Caco-2 (cell line): ENCODE measurements at regions of chr3 and their contacts with region 1.

Region 1: GRCh38 chr3:44206862-44207652 is 34.6 kb upstream of the TOPAZ1 start:
- DNase-seq: no peak
- H3K4me3 ChIP-seq: no peak overlapping the region
- H3K4me3 Mint-ChIP-seq: no peak overlapping the region
- H3K27ac Mint-ChIP-seq: peak overlapping the region; percentile 85
- H3K4me1 ChIP-seq: peaks cover 27% of the 10 kb centered on the region
- H3K4me1 Mint-ChIP-seq: peaks cover 12% of the 10 kb centered on the region
- H3K27me3 ChIP-seq: no peaks in the 10 kb centered on the region
- H3K27me3 Mint-ChIP-seq: no peaks in the 10 kb centered on the region
- CTCF ChIP-seq: no peak

Region 2: DNA sequence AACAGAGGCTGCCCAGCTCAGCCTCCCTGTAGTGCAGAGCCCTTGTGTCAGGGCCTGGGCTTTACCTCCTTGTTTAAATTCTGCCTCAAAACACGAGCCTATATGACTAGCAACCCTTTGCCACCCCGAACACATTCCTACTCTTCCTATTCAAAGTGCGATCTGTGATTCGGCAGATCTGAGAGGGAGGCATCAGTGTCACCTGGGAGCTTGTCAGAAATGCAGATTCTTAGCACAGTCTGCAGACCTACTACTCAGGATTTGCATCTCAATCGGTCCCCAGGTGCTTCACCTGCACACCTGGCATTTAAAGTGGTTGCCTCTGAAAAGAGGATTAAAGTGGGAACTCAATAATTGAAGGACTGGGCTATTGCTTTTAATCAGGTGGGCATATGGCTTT is 238.6 kb before region 1 on chr3:
- CTCF ChIA-PET with region 1: no interaction called
- POLR2A ChIA-PET with region 1: no interaction called
- intact Hi-C with region 1: no loop called
- DNase-seq: no peak
- H3K4me3 ChIP-seq: no peak overlapping the region
- H3K4me3 Mint-ChIP-seq: no peak overlapping the region
- H3K27ac Mint-ChIP-seq: no peak overlapping the region
- H3K4me1 ChIP-seq: no peaks in the 10 kb centered on the region
- H3K4me1 Mint-ChIP-seq: no peaks in the 10 kb centered on the region
- H3K27me3 ChIP-seq: no peaks in the 10 kb centered on the region; the same call in 1 of the 2 replicates
- H3K27me3 Mint-ChIP-seq: peaks cover 19% of the 10 kb centered on the region
- CTCF ChIP-seq: no peak

Region 3: DNA sequence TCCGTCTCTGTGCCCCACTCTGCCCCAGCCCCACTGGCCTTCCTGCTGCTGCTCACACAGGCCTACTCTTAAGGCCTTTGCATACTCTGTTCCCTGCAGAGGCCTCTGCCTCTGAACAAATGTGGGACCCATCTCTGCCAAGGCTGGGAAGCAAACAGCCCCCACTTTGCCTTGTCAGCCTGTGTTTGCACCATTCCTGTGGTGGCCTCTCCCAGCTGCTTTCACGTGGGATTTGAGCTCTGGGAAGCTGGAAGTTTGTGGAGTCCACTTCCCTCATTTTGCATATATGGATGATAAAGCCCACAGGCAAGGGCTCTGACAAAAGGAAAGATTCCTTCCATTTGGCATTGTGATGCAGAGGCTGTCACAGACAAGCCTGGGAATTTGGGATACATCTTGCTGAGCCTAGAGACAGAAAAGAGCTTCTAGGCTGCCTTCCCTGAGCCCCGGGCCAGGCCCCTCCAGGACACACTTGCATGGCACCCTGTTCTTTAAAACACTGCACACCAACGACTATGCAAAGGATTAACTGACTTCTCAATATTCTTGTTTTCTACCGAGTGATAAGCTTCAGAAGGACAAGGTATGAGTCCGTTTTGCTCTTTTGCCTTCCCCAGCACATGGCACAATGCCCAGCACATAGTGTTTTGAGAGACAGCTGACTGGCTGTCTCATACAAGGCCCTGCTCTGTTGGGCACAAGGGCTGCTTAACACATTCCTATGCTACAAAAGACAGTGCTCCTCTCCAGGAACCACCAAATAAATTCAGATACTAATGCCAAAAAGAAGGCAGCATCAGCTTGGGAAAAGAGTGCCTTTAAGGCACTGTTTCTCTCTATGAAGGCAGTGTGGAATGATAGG is 86.1 kb before region 1 on chr3:
- CTCF ChIA-PET with region 1: no interaction called
- POLR2A ChIA-PET with region 1: no interaction called
- intact Hi-C with region 1: no loop called
- DNase-seq: no peak
- H3K4me3 ChIP-seq: no peak overlapping the region
- H3K4me3 Mint-ChIP-seq: no peak overlapping the region
- H3K27ac Mint-ChIP-seq: no peak overlapping the region
- H3K4me1 ChIP-seq: peaks cover 23% of the 10 kb centered on the region
- H3K4me1 Mint-ChIP-seq: peaks cover 11% of the 10 kb centered on the region
- H3K27me3 ChIP-seq: no peaks in the 10 kb centered on the region
- H3K27me3 Mint-ChIP-seq: no peaks in the 10 kb centered on the region
- CTCF ChIP-seq: no peak

Region 4: GRCh38 chr3:44160818-44161217 is 46.2 kb before region 1 on chr3:
- CTCF ChIA-PET with region 1: no interaction called
- POLR2A ChIA-PET with region 1: no interaction called
- intact Hi-C with region 1: no loop called
- DNase-seq: no peak
- H3K4me3 ChIP-seq: no peak overlapping the region
- H3K4me3 Mint-ChIP-seq: no peak overlapping the region
- H3K27ac Mint-ChIP-seq: no peak overlapping the region
- H3K4me1 ChIP-seq: no peaks in the 10 kb centered on the region
- H3K4me1 Mint-ChIP-seq: no peaks in the 10 kb centered on the region
- H3K27me3 ChIP-seq: no peaks in the 10 kb centered on the region; the same call in 1 of the 2 replicates
- H3K27me3 Mint-ChIP-seq: peaks cover 20% of the 10 kb centered on the region
- CTCF ChIP-seq: no peak

Region 5: GRCh38 chr3:44179246-44179645 is 27.8 kb before region 1 on chr3:
- CTCF ChIA-PET with region 1: no interaction called
- POLR2A ChIA-PET with region 1: no interaction called
- intact Hi-C with region 1: loop called (anchors 1 kb)
- DNase-seq: no peak
- H3K4me3 ChIP-seq: no peak overlapping the region
- H3K4me3 Mint-ChIP-seq: no peak overlapping the region
- H3K27ac Mint-ChIP-seq: no peak overlapping the region
- H3K4me1 ChIP-seq: no peaks in the 10 kb centered on the region
- H3K4me1 Mint-ChIP-seq: peaks cover 15% of the 10 kb centered on the region
- H3K27me3 ChIP-seq: no peaks in the 10 kb centered on the region
- H3K27me3 Mint-ChIP-seq: peaks cover 4% of the 10 kb centered on the region
- CTCF ChIP-seq: no peak

Region 6: GRCh38 chr3:44235604-44236484 is 28.8 kb after region 1 on chr3:
- CTCF ChIA-PET with region 1: interaction called, 3 read pairs
- POLR2A ChIA-PET with region 1: no interaction called
- intact Hi-C with region 1: loop called (anchors 2 kb)
- DNase-seq: peak; percentile 66 to 70
- H3K4me3 ChIP-seq: no peak overlapping the region
- H3K4me3 Mint-ChIP-seq: peak overlapping the region; percentile 38
- H3K27ac Mint-ChIP-seq: peak overlapping the region; percentile 29
- H3K4me1 ChIP-seq: peaks cover 26% of the 10 kb centered on the region
- H3K4me1 Mint-ChIP-seq: peaks cover 9% of the 10 kb centered on the region
- H3K27me3 ChIP-seq: no peaks in the 10 kb centered on the region
- H3K27me3 Mint-ChIP-seq: no peaks in the 10 kb centered on the region
- CTCF ChIP-seq: peak; percentile 56 to 74